GM10248 (cell line): ENCODE measurements at regions of chr3 and their contacts with region 1.

Region 1: GRCh38 chr3:15051531-15051930 is 13.6 kb downstream of the MRPS25 start:
- DNase-seq: peak; percentile 72
- CTCF ChIP-seq: peak; percentile 65

Region 2: DNA sequence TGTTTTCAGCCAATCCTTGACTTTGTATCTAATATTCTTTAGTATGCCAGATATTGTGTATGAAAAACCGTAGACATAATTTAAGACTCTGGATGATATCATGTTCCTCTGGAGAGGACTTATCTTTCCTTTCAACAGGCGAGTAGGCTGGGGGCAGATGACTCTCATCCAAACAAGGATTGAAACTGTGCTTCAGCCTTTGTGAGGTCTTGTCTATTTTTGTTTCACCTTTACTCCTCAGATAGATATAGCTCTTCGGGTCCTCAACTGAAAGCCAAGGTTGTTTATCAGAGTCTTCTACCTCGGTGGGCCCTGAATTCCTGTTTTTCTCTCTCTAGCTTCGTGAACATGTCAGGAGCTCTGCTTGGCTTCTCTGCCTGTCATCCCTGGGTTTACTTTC is 310.5 kb before region 1 on chr3:
- CTCF ChIA-PET with region 1: no interaction called
- POLR2A ChIA-PET with region 1: no interaction called
- DNase-seq: no peak
- CTCF ChIP-seq: no peak

Region 3: DNA sequence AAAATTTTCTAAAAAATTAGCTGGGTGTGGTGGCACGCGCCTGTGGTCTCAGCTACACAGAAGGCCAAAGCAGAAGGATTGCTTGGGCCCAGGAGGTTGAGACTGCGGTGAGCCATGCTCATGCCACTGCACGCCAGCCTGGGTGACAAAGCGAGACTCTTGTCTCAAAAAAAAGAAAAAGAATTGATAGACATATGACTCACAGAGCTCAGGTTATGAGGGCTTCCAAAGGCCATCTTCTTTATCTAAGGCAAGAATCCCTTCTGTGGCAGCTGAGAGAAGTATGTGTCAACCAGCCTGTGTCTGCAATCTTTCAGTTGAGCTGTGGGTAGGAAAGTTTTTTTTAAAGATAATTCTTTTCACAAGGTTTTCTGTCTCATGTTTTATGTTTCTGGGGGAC is 40.4 kb before region 1 on chr3:
- CTCF ChIA-PET with region 1: interaction called, 11 read pairs
- POLR2A ChIA-PET with region 1: no interaction called
- DNase-seq: no peak
- CTCF ChIP-seq: no peak

Region 4: GRCh38 chr3:15038306-15038705 is 13.2 kb before region 1 on chr3:
- CTCF ChIA-PET with region 1: interaction called, 25 read pairs
- POLR2A ChIA-PET with region 1: no interaction called
- DNase-seq: no peak
- CTCF ChIP-seq: no peak

Region 5: DNA sequence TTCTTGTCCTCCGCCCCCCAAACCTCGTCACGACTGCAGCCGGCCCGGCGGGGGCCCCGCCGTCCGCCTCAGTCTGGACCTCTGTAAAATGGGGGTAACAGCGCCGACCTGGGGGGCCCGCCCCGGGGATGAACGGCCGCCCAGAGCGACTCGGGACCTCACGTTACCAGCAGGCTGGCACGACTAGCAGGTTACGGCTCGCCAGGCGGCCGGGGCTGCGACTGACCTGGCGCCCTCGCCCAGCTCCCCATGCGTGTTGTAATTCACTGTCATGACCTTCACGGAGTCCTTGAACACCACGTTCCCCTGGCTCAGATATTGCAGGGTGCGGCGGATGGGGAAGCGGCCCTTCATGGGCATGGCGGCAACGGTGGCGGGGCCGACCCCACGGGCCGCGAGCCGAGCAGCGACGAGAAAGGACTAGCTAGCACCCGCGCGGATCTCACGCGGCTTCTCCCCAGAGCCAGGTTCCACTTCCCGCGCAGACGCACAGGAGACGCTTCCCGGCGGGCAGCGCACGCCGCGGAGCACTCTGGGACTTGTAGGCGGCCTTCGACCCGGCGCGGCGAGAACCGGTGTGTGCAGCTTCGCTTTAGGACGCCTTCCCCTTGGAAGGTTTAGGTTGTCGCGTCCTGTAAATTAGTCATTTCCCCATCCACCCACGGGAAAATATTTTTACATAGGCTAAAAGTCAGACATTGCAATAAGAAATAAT is 13.5 kb after region 1 on chr3 and contains the start of gene MRPS25:
- CTCF ChIA-PET with region 1: interaction called, 26 read pairs
- POLR2A ChIA-PET with region 1: interaction called, 4 read pairs
- DNase-seq: peak; percentile 96
- CTCF ChIP-seq: no peak

Region 6: GRCh38 chr3:15074493-15074892 is 23.0 kb after region 1 on chr3:
- CTCF ChIA-PET with region 1: interaction called, 15 read pairs
- POLR2A ChIA-PET with region 1: no interaction called
- DNase-seq: no peak
- CTCF ChIP-seq: no peak

Region 7: GRCh38 chr3:15180042-15180611 is 128.6 kb after region 1 on chr3:
- CTCF ChIA-PET with region 1: no interaction called
- POLR2A ChIA-PET with region 1: no interaction called
- DNase-seq: peak; percentile 28
- CTCF ChIP-seq: no peak